OCI-LY7 (cell line): ENCODE measurements at regions of chr11 and their contacts with region 1.

Region 1: GRCh38 chr11:113875234-113876073 is at the start of gene USP28:
- DNase-seq: peak; percentile 97
- H3K4me3 ChIP-seq: peak within 1 kb of the TSS; percentile 96
- H3K27ac ChIP-seq: peak within 1 kb of the TSS; percentile 68
- H3K4me1 ChIP-seq: peaks cover 45% of the 10 kb centered on the region
- CTCF ChIP-seq: peak; percentile 29; the same call in 1 of the 2 replicates
- total RNA-seq, gene USP28: 26.8 and 36.8 TPM in 2 replicates

Region 2: DNA sequence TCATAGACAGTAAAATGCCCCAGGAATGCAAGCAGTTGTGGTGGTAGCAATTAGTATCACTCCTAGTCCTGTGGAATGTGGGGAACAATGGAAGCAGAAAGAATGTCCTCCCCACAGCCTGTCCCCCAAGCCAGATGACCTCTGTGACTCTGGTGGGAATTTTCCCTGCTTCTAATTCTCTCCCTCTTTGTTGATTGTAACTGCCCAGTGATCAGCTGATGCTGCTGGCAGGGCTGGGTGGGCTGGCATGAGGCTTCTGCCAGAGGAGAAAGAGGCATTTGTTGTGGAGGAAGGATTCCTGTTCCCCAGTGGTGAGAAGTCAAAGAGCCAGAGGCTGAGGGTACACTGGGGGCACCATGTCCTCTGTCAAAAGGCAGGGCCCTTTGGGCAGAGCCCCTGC is 1030.9 kb before region 1 on chr11:
- CTCF ChIA-PET with region 1: no interaction called
- POLR2A ChIA-PET with region 1: no interaction called
- intact Hi-C with region 1: no loop called
- DNase-seq: no peak
- H3K4me3 ChIP-seq: no peak overlapping the region
- H3K27ac ChIP-seq: no peak overlapping the region
- H3K4me1 ChIP-seq: no peaks in the 10 kb centered on the region
- CTCF ChIP-seq: no peak

Region 3: GRCh38 chr11:113773416-113774173 is 101.9 kb before region 1 on chr11 and contains the start of gene ZW10:
- CTCF ChIA-PET with region 1: no interaction called
- POLR2A ChIA-PET with region 1: interaction called, 4 read pairs
- intact Hi-C with region 1: loop called (anchors 2 kb)
- DNase-seq: peak; percentile 94
- H3K4me3 ChIP-seq: peak within 1 kb of the TSS; percentile 99
- H3K27ac ChIP-seq: peak within 1 kb of the TSS; percentile 41
- H3K4me1 ChIP-seq: peaks cover 20% of the 10 kb centered on the region
- CTCF ChIP-seq: peak; percentile 98
- total RNA-seq, gene ZW10: 15.9 and 18.9 TPM in 2 replicates

Region 4: DNA sequence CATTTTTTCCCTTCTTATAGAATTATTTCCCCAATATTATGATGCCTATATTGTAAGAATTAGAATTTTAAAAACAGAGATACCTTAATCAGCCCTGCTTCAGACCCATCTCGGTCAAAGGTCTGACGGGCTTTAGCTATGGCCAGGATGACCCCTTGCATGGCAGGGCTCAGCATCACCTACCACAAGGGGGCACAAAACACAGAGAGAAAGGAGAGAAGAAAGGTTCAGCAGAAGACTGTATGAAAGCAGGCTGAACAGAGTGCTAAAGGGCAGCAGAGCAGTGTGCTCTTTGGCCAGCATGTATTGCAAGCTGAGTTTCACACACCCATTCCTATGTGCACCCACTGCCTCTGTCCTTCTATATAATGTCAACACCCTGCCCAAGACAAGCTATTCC is 69.0 kb before region 1 on chr11:
- CTCF ChIA-PET with region 1: no interaction called
- POLR2A ChIA-PET with region 1: no interaction called
- intact Hi-C with region 1: loop called (anchors 5 kb)
- DNase-seq: peak; percentile 46
- H3K4me3 ChIP-seq: no peak overlapping the region
- H3K27ac ChIP-seq: no peak overlapping the region
- H3K4me1 ChIP-seq: no peaks in the 10 kb centered on the region
- CTCF ChIP-seq: peak; percentile 77

Region 5: DNA sequence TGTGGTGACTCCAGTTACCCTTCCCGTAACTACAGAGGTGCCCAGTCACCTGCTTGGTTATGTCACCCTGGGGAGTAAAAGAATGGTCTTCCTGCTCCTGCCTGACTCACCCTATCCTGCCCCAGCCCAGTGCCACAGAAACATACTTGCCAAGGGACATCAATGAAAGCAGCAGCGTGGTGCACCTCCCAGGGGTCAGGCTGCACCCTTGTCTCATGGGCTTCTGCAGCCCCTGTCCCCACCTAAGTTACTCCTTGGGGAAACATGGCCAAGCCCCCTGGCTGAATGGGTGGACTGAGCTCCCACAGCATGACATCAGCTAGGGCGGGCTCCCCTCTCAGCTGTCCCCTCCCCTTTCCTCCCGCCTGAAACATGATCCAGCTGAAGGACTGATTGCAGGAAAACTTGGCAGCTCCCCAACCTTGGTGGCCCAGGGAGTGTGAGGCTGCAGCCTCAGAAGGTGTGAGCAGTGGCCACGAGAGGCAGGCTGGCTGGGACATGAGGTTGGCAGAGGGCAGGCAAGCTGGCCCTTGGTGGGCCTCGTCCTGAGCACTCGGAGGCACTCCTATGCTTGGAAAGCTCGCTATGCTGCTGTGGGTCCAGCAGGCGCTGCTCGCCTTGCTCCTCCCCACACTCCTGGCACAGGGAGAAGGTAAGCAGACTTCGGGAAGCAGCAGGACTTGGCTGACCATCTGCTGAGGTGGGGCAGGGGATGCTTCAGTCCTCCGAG is 99.5 kb after region 1 on chr11 and contains the start of gene HTR3A:
- CTCF ChIA-PET with region 1: interaction called, 15 read pairs
- POLR2A ChIA-PET with region 1: no interaction called
- intact Hi-C with region 1: loop called (anchors 5 kb)
- DNase-seq: no peak
- H3K4me3 ChIP-seq: no peak within 1 kb of the TSS
- H3K27ac ChIP-seq: no peak within 1 kb of the TSS
- H3K4me1 ChIP-seq: peaks cover 36% of the 10 kb centered on the region
- CTCF ChIP-seq: no peak
- total RNA-seq, gene HTR3A: not detected in 2 replicates

Region 6: DNA sequence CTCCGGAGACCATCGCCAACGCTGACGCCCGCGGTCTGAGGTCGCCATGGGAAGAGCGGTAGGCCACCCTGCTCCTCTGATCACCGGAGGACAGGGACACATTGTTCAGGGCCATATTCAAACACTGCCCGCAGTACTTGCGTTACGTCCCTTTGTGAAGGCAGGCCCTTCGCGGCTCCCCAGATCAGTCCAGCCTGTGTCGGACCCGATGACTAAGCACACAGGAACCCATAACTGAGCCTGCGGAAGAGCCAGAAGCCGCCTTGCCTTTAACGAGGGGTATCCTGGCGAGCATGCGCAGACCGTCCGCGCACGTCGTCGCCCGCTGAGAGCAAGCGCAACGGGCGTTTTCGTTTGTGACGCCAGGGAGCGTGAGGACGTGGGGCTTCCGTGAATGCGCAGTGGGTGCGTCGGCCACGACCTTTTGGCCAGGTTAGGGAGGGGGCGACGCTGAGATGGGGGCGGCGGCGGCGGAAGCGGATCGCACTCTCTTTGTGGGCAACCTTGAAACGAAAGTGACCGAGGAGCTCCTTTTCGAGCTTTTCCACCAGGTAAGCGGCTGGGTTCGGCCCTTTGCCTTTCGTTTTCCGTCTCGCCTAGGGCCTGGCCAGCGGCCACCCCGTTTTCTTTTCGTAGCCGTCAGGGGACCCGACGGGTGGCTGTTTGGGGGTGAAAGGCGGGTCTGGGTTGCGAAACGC is 524.9 kb after region 1 on chr11 and contains the starts of genes C11orf71 and RBM7:
- CTCF ChIA-PET with region 1: no interaction called
- POLR2A ChIA-PET with region 1: no interaction called
- intact Hi-C with region 1: loop called (anchors 10 kb)
- DNase-seq: peak; percentile 99
- H3K4me3 ChIP-seq: peak within 1 kb of the TSS; percentile 79
- H3K27ac ChIP-seq: peak within 1 kb of the TSS; percentile 67
- H3K4me1 ChIP-seq: peaks cover 30% of the 10 kb centered on the region
- CTCF ChIP-seq: no peak
- total RNA-seq, gene C11orf71: 13.5 and 28.7 TPM in 2 replicates
- total RNA-seq, gene RBM7: 21.3 and 28.6 TPM in 2 replicates